K562 (cell line): ENCODE measurements at regions of chr6 and their contacts with region 1.

Region 1: GRCh38 chr6:82247634-82248232 is at the start of gene IBTK:
- DNase-seq: peak; percentile 96 to 99 (median 98)
- ATAC-seq: peak; percentile 86
- H3K4me3 ChIP-seq: peak within 1 kb of the TSS; percentile 83
- H3K27ac ChIP-seq: peak within 1 kb of the TSS; percentile 97
- H3K4me1 ChIP-seq: peaks cover 12 to 14% of the 10 kb centered on the region in 2 experiments; a peak in 4 of 5 replicates
- H3K27me3 ChIP-seq: no peaks in the 10 kb centered on the region
- CTCF ChIP-seq: no peak
- EP300 ChIP-seq: no peak
- POLR2A ChIP-seq: peak; percentile 86
- RAD21 ChIP-seq: no peak
- polyA plus RNA-seq, gene IBTK: 13.2 to 16.9 TPM

Region 2: GRCh38 chr6:82205930-82206392 is 41.8 kb before region 1 on chr6:
- CTCF ChIA-PET with region 1: no interaction called
- POLR2A ChIA-PET with region 1: interaction called, 3 read pairs
- in situ Hi-C with region 1: no loop called
- intact Hi-C with region 1: loop called (anchors 5 kb)
- DNase-seq: peak; percentile 11 to 76 (median 35)
- ATAC-seq: peak; percentile 98
- H3K4me3 ChIP-seq: no peak overlapping the region
- H3K27ac ChIP-seq: peak overlapping the region; percentile 33; the same call in 1 of the 3 replicates
- H3K4me1 ChIP-seq: peaks cover 2 to 5% of the 10 kb centered on the region in 2 experiments; a peak in 4 of 5 replicates
- H3K27me3 ChIP-seq: no peaks in the 10 kb centered on the region
- CTCF ChIP-seq: no peak
- EP300 ChIP-seq: peak; percentile 97
- POLR2A ChIP-seq: no peak
- RAD21 ChIP-seq: no peak

Region 3: DNA sequence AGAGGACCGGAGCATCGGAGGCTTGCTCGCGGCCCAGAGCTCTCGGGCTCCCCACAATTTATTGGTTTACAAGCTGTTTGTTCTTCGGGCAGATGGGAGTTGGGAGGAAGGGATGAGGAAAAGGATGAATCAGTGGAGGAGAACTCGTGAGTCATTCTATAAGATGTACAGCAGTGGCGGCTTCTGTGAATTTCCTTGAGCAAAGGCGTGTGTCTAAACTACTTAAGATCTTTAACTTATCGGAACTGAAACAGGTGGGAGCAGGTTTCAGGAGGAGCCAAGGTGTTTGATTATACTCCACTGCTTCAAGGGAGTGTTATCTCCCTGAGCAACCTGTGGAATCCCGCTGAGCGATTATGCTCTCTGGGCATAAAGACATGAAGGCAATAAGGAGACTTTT is 50.3 kb after region 1 on chr6:
- CTCF ChIA-PET with region 1: no interaction called
- POLR2A ChIA-PET with region 1: no interaction called
- in situ Hi-C with region 1: no loop called
- intact Hi-C with region 1: no loop called
- DNase-seq: peak in 1 of 4 experiments; percentile 24
- ATAC-seq: no peak
- H3K4me3 ChIP-seq: no peak overlapping the region
- H3K27ac ChIP-seq: no peak overlapping the region
- H3K4me1 ChIP-seq: no peaks in the 10 kb centered on the region; a peak in 1 of 5 replicates
- H3K27me3 ChIP-seq: no peaks in the 10 kb centered on the region; a peak in 2 of 5 replicates
- CTCF ChIP-seq: no peak
- EP300 ChIP-seq: no peak
- POLR2A ChIP-seq: no peak
- RAD21 ChIP-seq: no peak

Region 4: DNA sequence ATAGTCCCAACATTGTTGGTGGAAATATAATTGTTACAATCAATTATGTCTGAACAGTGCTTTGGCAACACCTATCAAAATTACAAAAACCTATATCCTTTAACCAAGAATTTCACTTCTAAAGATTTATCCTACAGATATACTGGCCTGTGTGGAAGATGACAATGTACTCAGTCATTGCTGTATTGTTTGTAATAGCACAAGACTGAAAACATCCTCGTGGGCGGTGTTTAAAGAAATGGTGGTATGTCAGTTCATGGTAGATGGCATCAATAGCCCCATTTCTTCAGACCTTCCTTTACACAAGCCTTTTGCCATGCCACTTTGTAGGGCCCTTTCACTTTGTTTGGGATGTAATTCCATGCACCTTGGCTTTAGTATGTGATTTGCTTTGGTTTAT is 106.1 kb after region 1 on chr6:
- CTCF ChIA-PET with region 1: no interaction called
- POLR2A ChIA-PET with region 1: no interaction called
- in situ Hi-C with region 1: no loop called
- intact Hi-C with region 1: no loop called
- DNase-seq: no peak
- ATAC-seq: no peak
- H3K4me3 ChIP-seq: no peak overlapping the region
- H3K27ac ChIP-seq: no peak overlapping the region
- H3K4me1 ChIP-seq: no peaks in the 10 kb centered on the region
- H3K27me3 ChIP-seq: no peaks in the 10 kb centered on the region
- CTCF ChIP-seq: no peak
- EP300 ChIP-seq: no peak
- POLR2A ChIP-seq: no peak
- RAD21 ChIP-seq: no peak

Region 5: GRCh38 chr6:83192871-83193746 is 945.4 kb after region 1 on chr6 and contains the starts of genes PGM3 and RWDD2A:
- CTCF ChIA-PET with region 1: no interaction called
- POLR2A ChIA-PET with region 1: no interaction called
- in situ Hi-C with region 1: loop called (anchors 25 kb)
- intact Hi-C with region 1: no loop called
- DNase-seq: peak; percentile 94 to 96 (median 96)
- ATAC-seq: peak; percentile 98
- H3K4me3 ChIP-seq: peak within 1 kb of the TSS; percentile 97
- H3K27ac ChIP-seq: peak within 1 kb of the TSS; percentile 87
- H3K4me1 ChIP-seq: peaks cover 6 to 14% of the 10 kb centered on the region in 2 experiments; a peak in 4 of 5 replicates
- H3K27me3 ChIP-seq: no peaks in the 10 kb centered on the region
- CTCF ChIP-seq: no peak
- EP300 ChIP-seq: no peak
- POLR2A ChIP-seq: peak; percentile 93
- RAD21 ChIP-seq: no peak
- polyA plus RNA-seq, gene PGM3: 75.3 to 107 TPM
- polyA plus RNA-seq, gene RWDD2A: 2.5 to 3.6 TPM